Activated T-helper 2 cell treated with anti-CD3 and anti-CD28 coated beads, Interferon-gamma antibody, Interleukin-2, Interleukin-4, amounts not matched to agents 10 μg/mL and 5 μg/mL and 100 μg/mL, durations not matched to agents 14 hours and 24 hours and 36 hours (primary cell): ENCODE measurements at regions of chr1 and their contacts with region 1.

Region 1: GRCh38 chr1:59332983-59333382 is 36.1 kb downstream of the FGGY start:
- DNase-seq: peak; percentile 24
- H3K4me3 Mint-ChIP-seq: no peak overlapping the region
- H3K27ac Mint-ChIP-seq: peak overlapping the region; percentile 74
- H3K4me1 Mint-ChIP-seq: peaks cover 34% of the 10 kb centered on the region
- H3K27me3 Mint-ChIP-seq: no peaks in the 10 kb centered on the region

Region 2: DNA sequence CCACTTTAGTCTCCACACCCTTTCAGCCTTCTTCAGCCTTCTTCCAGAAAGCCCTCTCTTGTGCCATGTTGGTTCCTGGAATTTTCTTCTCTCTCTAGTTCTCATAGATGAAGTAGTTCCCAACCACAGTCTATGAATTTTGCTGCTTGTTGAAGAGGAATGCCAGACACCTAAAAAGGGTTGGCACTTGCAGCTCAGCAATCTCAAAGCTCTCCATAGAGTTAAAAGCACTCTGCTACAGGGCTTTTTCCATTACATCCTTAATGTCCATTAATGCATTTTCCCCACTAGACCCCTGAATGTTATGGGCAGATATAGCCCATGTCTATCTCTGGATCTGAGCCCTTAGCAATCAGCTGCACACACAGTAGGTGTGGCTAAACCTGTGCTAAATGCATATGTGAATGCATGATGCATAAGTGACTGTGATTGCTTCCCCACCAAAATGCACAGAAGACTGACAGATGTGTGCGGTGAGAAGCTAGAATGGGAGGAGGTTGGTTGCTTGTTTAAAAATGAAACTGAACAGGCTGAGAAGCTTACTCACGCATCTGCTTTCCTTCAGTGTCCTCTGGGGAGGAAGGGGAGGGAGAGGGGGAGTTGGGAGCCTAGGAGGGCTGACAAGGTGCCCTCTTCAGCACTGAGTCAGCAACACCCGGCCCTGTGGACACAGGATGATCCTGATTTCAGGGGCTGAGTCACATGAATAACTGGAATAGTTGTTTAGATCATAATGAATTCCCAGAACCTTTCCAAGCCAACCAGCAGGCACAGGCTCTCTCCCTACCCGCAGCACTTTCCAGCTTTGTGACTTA is 182.2 kb before region 1 on chr1:
- intact Hi-C with region 1: loop called (anchors 10 kb)
- DNase-seq: peak; percentile 19
- H3K4me3 Mint-ChIP-seq: no peak overlapping the region
- H3K27ac Mint-ChIP-seq: no peak overlapping the region
- H3K4me1 Mint-ChIP-seq: peaks cover 26% of the 10 kb centered on the region
- H3K27me3 Mint-ChIP-seq: no peaks in the 10 kb centered on the region

Region 3: GRCh38 chr1:59276439-59276851 is 56.5 kb before region 1 on chr1:
- intact Hi-C with region 1: no loop called
- DNase-seq: no peak
- H3K4me3 Mint-ChIP-seq: no peak overlapping the region
- H3K27ac Mint-ChIP-seq: no peak overlapping the region
- H3K4me1 Mint-ChIP-seq: peaks cover 15% of the 10 kb centered on the region
- H3K27me3 Mint-ChIP-seq: peaks cover 6% of the 10 kb centered on the region

Region 4: DNA sequence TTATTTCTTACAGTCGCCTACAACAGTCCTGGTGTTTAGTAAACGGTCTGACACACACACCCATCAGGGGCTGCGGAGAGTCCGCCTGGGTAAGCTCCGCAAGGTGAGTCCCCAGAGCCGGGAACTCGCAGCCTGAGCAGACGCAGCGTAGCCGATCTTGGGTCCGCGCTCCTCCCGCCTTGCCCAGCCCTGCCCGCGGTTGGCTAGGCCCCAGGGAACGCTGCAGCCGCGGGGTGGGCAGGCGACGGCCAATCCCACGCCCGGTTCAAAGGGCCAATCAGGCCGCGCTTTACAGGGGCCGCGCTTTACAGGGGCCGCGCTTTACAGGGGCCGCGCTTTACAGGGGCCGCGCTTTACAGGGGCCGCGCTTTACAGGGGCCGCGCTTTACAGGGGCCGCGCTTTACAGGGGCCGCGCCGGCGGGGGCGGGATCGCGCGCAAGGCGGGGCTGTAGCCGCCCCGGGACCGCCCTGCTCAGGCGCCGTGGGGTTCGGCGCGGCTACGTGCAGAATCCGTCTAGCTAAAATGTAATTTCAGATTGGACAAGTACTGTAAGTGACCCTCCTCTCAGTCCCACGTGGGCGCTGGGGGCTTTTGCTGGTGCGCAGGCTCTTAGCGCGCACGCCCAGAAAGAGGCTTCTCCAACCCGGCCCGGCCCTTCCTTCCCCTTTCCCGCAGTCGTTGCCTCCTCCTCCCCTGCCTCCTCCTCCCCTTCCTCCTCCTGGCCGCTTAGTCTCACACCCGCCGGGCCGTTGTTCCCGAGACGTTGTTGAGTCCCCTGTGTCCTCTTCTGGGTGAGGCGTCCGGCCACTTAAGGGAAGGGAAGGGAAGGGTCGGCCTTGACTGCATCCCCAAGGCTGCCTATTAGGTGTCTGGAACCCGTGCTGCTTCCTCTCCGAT is 36.4 kb before region 1 on chr1 and contains the start of gene FGGY:
- intact Hi-C with region 1: loop called (anchors 5 kb)
- DNase-seq: peak; percentile 85
- H3K4me3 Mint-ChIP-seq: peak within 1 kb of the TSS; percentile 93
- H3K27ac Mint-ChIP-seq: peak within 1 kb of the TSS; percentile 88
- H3K4me1 Mint-ChIP-seq: peaks cover 36% of the 10 kb centered on the region
- H3K27me3 Mint-ChIP-seq: no peaks in the 10 kb centered on the region
- total RNA-seq, gene FGGY: 10.5 and 13.4 TPM in 2 replicates

Region 5: DNA sequence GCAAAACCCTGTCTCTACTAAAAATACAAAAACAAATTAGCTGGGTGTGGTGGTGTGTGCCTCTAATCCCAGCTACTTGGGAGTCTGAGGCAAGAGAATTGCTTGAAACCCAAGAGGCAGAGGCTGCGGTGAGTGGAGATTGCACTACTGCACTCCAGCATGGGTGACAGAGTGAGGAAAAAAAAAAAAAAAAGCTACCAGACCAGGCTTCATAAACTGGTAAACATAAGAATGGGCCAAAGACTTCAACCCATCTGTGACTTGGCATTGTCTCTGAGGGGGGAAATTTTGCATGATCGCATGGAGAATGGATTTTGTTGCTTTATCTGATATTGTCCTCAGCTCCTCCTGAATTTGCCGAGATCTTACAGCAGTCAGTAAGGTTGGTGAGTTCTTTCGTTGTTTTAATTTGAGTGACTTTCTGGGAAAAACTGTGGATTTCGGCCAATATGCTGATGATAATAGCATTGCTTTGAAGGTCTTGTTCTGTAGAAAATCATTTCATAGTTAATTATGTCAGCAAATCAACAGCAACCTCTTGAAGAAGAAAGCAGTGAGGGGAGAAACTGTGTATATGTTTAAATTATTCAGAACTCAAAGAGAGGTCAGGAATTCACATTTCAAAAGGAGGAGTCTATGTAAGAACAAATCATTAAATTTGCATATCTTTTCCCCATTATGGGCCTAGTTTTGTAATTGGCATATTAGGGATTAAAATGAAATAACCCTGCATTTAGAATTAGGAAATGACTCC is 23.0 kb before region 1 on chr1:
- intact Hi-C with region 1: loop called (anchors 2 kb)
- DNase-seq: no peak
- H3K4me3 Mint-ChIP-seq: no peak overlapping the region
- H3K27ac Mint-ChIP-seq: no peak overlapping the region
- H3K4me1 Mint-ChIP-seq: peaks cover 21% of the 10 kb centered on the region
- H3K27me3 Mint-ChIP-seq: no peaks in the 10 kb centered on the region

Region 6: GRCh38 chr1:59354709-59355337 is 21.8 kb after region 1 on chr1:
- intact Hi-C with region 1: loop called (anchors 1 kb)
- DNase-seq: no peak
- H3K4me3 Mint-ChIP-seq: peak overlapping the region; percentile 32
- H3K27ac Mint-ChIP-seq: peak overlapping the region; percentile 95
- H3K4me1 Mint-ChIP-seq: peaks cover 37% of the 10 kb centered on the region
- H3K27me3 Mint-ChIP-seq: no peaks in the 10 kb centered on the region

Region 7: DNA sequence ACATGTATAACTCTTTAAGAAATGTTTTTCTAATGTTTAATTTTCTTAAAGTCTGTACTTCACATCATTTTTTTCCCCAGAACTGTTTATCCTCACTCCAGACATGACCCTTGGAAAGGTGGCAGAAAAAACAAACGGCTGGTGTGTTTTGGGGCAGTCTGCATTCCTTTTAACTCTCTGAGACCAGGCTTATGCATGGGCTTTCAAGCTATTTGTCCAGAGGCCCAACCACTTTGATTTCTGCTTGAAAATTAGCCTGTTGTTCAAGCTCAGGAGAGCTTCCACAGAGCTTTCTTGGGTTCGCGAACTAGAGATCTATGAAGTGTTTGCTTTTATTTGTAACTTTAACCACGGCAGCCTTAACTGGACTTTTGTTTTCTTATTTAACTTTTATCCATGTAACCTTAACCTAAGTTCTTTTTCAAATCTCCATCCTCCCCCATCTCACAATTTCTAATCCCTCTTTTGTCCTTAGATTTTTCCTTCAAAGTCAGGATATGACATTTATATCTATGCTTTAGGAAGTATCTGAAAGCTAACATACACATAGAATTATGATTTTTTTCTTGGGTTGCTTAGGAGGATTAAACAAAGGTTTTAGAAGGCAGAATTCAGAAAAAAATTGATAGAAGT is 75.7 kb after region 1 on chr1:
- intact Hi-C with region 1: no loop called
- DNase-seq: no peak
- H3K4me3 Mint-ChIP-seq: no peak overlapping the region
- H3K27ac Mint-ChIP-seq: no peak overlapping the region
- H3K4me1 Mint-ChIP-seq: peaks cover 6% of the 10 kb centered on the region
- H3K27me3 Mint-ChIP-seq: no peaks in the 10 kb centered on the region

Region 8: DNA sequence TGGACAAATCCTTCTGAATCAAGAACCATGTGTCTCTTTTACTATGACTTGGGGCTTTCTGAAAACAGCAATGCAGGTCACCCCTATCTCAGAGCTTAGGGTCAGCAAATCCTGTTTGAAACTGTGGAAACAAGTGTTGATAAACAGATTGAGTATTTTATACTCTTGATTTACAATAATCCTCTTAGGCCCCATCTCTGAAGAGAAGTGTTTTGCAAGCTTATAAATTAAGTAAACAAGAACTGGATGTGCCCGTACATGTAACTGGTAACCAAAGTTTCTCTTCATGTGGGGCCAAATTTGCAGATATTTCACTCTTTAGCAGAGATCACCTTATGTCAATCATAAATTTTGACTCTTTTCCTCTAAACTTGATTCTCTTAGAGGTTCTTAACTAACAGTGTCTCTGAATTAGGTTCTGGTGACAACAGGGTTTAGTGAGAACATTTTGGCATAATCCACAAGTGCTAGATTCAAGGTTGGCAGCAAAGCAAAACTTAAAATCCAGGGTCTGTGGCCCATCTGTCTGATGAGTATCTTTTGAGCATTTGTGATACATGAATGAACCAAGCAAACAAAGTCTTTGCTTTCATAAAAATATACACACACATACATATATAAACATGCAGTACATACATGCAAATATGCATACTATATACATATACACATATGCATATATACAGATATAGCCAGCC is 298.7 kb after region 1 on chr1:
- intact Hi-C with region 1: no loop called
- DNase-seq: no peak
- H3K4me3 Mint-ChIP-seq: no peak overlapping the region
- H3K27ac Mint-ChIP-seq: no peak overlapping the region
- H3K4me1 Mint-ChIP-seq: no peaks in the 10 kb centered on the region
- H3K27me3 Mint-ChIP-seq: no peaks in the 10 kb centered on the region